Pancreas (tissue), 10 donors: ENCODE measurements at regions of chr3 and their contacts with region 1.

Region 1: GRCh38 chr3:45043728-45044299 is 17.7 kb downstream of the CLEC3B start:
- DNase-seq: no peak
- ATAC-seq: peak in 1 of 4 donors; percentile 40
- H3K4me3 ChIP-seq: no peak overlapping the region
- H3K27ac ChIP-seq: no peak overlapping the region
- H3K4me1 ChIP-seq: peaks cover 0 to 7% (median 0%) of the 10 kb centered on the region in 3 donors
- H3K27me3 ChIP-seq: no peaks in the 10 kb centered on the region
- CTCF ChIP-seq: no peak

Region 2: GRCh38 chr3:44992555-44993470 is 51.0 kb before region 1 on chr3:
- intact Hi-C with region 1: no loop called
- DNase-seq: no peak
- ATAC-seq: no peak
- H3K4me3 ChIP-seq: no peak overlapping the region
- H3K27ac ChIP-seq: peak overlapping the region in 1 of 4 donors; percentile 23
- H3K4me1 ChIP-seq: peaks cover 6 to 22% (median 21%) of the 10 kb centered on the region in 3 donors
- H3K27me3 ChIP-seq: no peaks in the 10 kb centered on the region
- CTCF ChIP-seq: peak; percentile 17 to 28 (median 24)

Region 3: DNA sequence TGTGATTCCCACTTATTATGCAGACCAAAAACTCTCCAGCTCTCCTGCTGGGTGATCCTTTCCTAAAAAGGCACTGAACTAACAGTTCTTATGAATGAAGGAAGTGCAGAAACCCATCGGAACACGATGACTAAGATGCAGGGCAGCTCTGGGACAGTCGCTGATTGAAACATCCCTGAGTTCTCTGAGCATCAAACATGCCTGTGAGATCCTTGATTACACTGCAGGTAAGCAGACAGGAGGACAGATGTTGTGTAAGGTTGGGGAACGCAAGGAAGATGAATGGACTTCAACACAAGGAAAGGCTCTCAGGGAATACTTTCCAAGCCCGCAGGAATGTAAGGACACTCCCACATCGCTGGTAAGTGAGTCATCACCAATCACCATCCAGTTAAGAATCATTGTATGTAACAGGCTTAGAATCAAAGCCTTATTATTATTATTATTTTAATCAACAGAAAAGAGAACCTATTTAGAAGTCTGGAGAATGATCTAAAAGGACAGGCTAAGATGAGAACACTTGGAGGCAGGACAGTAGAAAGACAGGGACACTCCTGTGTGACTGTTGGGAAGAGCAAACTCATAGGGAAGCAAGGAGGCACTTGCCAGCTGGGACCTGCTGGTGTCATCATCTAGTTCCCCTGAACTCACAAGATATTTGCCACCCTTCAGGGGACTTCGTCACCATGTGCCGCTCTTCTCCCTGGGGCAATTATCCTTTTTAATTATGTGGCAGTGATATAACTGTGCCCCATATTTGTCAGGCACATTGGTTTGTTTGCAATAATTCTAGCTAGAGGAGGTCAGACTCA is 156.2 kb after region 1 on chr3:
- intact Hi-C with region 1: loop called in 1 of 3 experiments (anchors 10 kb)
- DNase-seq: no peak
- ATAC-seq: peak; percentile 28 to 78 (median 63)
- H3K4me3 ChIP-seq: no peak overlapping the region
- H3K27ac ChIP-seq: no peak overlapping the region
- H3K4me1 ChIP-seq: no peaks in the 10 kb centered on the region
- H3K27me3 ChIP-seq: no peaks in the 10 kb centered on the region
- CTCF ChIP-seq: no peak